Upper lobe of right lung (tissue), 1 donor: ENCODE measurements at regions of chr1 and their contacts with region 1.

Region 1: DNA sequence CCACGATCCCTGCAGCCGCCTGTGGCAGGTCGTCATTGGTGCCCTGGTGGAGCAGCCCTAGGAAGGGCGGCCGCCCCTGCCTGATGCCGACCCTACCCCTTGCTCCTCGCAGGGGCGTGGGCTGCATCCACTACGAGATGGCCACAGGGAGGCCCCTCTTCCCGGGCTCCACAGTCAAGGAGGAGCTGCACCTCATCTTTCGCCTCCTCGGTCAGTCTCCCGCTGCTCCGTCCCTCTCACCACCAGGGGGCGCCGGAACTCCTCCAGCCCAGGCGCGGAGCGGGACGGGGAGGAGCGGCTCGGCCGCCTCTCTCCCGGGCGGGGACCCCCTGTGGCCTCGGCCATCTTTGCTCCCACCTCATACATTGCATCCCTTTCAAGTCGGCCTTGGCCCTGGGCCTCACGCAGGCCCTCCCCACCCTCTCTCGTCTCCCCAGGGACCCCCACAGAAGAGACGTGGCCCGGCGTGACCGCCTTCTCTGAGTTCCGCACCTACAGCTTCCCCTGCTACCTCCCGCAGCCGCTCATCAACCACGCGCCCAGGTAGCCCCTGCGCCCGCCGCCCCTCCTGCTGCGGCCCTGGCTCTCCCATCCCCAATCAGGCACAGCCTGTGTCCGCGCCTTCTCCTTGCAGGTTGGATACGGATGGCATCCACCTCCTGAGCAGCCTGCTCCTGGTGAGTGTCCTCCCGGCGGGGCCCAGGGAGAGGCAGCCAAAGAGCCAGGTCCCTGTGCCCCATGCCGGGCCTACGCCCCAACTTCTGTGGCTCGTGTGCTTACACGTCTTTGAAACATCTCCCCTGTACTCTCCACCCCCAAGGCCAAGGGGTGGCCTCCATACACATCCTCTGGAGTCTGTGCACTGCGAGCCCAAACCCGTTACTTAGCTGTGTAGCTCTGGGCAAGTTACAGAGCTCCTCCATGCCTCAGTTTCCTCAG is 24.7 kb downstream of the CDK18 start:
- DNase-seq: peak; percentile 89
- ATAC-seq: peak; percentile 82
- H3K4me3 ChIP-seq: peak overlapping the region; percentile 40
- H3K27ac ChIP-seq: no peak overlapping the region
- H3K4me1 ChIP-seq: no peaks in the 10 kb centered on the region
- H3K27me3 ChIP-seq: no peaks in the 10 kb centered on the region
- CTCF ChIP-seq: peak; percentile 95

Region 2: DNA sequence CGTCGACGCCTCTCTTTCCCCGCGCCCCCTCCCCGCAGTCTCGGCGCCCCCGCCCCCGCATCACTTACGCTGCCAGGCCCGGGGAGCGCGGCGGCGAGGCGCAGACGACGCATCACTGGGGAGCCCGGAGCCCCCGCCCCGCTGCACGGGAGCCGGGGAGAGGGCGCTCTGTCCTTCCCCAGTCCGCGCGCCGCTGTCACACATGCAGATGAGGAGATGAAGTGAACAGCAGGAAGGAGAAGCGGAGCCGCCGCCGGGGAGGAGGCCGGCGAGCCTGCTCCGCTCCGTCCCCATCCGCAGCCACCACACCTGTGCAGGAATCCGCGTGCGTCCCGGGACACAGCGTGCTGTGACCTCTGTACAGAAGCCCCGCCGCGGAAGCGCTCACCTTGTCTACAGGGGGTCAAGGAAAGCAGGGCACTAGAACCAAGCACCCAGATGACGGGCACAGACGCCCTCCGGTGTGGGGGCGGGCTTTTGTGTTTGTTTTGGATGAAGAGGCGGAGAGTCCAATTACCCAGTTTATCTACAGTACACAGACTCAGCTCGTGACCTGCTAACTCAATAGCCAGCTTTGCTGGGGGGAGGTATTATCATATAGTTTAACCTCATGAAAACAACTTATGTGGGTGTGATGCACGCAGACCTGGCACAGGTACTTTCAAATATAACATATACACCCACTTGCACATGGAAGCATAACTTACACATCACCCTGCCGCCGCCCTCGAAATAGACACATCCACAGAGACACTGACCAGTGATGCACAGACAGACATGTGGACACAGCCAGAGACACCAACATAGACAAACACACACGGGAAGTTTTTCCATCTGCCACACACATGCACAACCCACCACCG is 184.9 kb before region 1 on chr1:
- intact Hi-C with region 1: loop called (anchors 10 kb)
- DNase-seq: peak; percentile 75
- ATAC-seq: peak; percentile 60
- H3K4me3 ChIP-seq: peak overlapping the region; percentile 28
- H3K27ac ChIP-seq: no peak overlapping the region
- H3K4me1 ChIP-seq: peaks cover 12% of the 10 kb centered on the region
- H3K27me3 ChIP-seq: peaks cover 39% of the 10 kb centered on the region
- CTCF ChIP-seq: no peak

Region 3: DNA sequence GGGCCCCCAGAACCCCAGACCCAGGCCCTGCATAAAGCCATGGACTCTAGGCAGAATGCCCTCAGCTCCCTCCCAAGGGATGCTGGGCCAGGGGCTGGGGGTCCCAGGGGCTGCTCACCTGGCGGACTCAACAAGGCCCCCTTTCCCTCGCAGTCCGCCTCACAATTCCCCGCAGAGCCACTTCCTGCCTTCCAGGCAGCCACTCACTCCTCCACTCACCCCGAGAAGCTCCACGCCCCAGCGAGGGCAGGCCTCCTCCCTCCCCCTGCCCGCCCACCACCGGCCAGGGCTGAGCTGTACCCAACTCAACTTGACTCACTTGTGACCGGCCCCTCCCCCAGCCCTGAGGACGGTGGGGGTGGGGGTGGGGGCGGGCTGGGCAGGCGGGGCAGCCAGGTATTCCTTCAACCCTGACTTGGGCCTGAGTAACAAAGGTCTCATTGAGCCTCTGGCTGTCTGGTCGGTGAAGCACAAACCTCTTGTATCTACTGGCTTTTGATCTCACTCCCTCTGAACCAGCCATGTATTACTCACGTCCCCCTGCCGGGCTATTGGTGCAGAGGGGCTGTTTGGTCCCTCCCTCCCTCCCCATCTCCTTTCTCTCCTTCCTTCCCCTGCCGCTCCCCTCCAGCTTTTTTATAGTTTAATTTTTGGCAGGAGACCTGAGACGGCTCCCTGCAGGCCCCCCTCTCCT is 79.3 kb before region 1 on chr1:
- intact Hi-C with region 1: no loop called
- DNase-seq: peak; percentile 92
- ATAC-seq: peak; percentile 91
- H3K4me3 ChIP-seq: peak overlapping the region; percentile 36
- H3K27ac ChIP-seq: peak overlapping the region; percentile 63
- H3K4me1 ChIP-seq: peaks cover 6% of the 10 kb centered on the region
- H3K27me3 ChIP-seq: peaks cover 45% of the 10 kb centered on the region
- CTCF ChIP-seq: no peak

Region 4: DNA sequence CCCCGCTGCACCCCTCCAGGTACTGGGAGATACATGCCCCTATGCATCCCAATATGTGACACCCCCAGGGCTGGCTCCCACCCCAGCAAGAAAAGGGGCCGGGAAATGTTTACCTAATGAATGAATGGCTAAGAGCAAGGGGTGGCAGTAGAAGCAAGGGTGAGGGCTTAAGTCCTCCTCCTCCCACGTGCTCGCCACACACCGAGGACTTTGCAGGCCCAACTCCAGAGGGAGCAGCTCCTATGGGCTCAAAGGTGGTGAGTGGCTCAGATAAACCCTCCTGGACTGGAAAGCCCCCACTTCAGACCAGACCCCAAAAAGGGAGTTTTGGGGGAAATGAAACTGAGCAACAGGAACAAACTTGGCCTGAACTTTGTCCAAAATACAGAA is 139.8 kb after region 1 on chr1:
- intact Hi-C with region 1: loop called (anchors 5 kb)
- DNase-seq: no peak
- ATAC-seq: peak; percentile 49
- H3K4me3 ChIP-seq: no peak overlapping the region
- H3K27ac ChIP-seq: no peak overlapping the region
- H3K4me1 ChIP-seq: no peaks in the 10 kb centered on the region
- H3K27me3 ChIP-seq: no peaks in the 10 kb centered on the region
- CTCF ChIP-seq: no peak

Region 5: DNA sequence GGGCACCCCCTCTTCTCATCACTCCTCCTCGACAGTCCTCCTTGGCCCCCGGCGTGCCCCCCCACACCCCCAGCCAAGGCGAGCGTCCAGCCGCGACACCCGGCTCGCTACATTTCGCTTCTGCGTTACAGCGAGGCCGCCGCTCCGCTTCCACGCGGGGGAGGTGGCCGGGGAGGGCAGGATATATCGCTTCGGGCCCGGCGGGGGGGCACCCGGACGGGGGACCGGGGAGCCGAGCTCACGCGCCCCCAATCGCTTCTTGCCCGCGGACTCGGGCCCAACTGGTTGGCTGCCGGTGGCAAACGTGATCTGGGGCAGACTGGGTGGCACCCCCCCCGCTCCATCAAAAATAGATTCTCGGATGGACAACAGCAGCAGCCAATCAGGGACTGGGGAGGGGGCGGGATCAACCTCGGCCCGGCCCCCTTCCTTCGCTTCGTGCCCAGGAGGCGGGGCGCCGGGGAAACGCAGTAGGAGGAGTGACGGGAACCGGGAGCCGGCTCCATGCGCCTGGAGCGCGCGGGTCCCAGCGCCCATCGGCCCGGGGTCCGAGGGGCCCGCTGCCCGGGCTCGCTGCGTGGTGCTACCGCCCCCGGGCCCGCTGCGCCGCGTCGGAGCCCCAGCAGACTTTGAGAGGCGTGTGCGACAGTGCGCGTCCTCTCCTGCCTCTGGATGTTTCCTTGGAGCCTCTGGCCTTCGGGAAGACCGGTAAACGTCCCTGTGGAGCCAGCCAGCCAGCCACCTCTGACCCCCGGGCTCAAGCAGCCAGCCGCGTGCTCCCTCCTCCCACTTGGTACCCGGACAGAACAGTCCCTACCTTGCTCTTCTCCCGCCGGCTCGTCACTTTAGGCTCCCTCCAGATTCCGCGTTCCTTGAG is 284.0 kb after region 1 on chr1 and contains the start of gene SLC41A1:
- intact Hi-C with region 1: no loop called
- DNase-seq: peak; percentile 95
- ATAC-seq: peak; percentile 97
- H3K4me3 ChIP-seq: peak within 1 kb of the TSS; percentile 96
- H3K27ac ChIP-seq: peak within 1 kb of the TSS; percentile 82
- H3K4me1 ChIP-seq: peaks cover 32% of the 10 kb centered on the region
- H3K27me3 ChIP-seq: no peaks in the 10 kb centered on the region
- CTCF ChIP-seq: no peak
- total RNA-seq, gene SLC41A1: 35.8 TPM